ENCODE measurements at regions of chr15 and their contacts with region 1.

Region 1: GRCh38 chr15:80507712-80508316 is 103.6 kb downstream of the ARNT2 start:
- DNase-seq: peak; percentile 96
- ATAC-seq: peak; percentile 82
- H3K4me3 ChIP-seq: no peak overlapping the region
- H3K27ac ChIP-seq: peak overlapping the region; percentile 99
- H3K4me1 ChIP-seq: peaks cover 24% of the 10 kb centered on the region
- H3K27me3 ChIP-seq: no peaks in the 10 kb centered on the region
- CTCF ChIP-seq: no peak
- POLR2A ChIP-seq: no peak
- RAD21 ChIP-seq: no peak

Region 2: DNA sequence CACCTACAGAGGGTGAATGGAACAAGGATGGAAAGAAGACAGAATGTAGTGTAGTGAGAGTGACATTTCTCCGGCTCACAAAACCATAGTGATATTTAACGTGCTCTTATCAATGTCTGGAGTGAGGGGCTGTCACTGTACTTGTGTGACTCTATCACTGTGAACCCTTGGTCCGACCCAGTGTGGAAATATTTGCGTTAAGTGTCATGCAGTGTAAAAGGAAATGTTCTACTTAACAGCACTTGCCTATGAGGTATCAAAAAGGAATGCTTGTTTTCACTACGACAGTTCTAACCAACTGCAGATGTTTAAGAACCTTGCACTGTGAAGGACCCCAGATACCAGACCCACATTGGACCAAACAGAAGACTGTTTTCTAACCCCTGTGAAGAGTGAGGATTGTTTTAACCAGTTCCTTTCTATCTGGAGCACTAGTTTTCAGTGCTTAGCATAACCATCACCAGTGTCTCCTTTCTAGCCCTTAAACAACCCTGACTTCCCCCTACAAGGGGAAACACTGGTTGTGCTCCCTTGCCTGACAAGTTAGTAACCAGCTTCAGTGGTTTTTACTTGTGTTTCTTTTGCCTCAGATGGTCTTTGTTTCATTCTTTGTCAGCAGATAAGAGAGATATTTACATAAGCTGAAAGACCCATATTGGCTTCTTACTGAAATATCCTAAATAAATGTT is 42.5 kb after region 1 on chr15:
- CTCF ChIA-PET with region 1: no interaction called
- POLR2A ChIA-PET with region 1: no interaction called
- dilution Hi-C with region 1: no loop called
- in situ Hi-C with region 1: no loop called
- intact Hi-C with region 1: loop called (anchors 1 kb)
- DNase-seq: peak; percentile 98
- ATAC-seq: peak; percentile 86
- H3K4me3 ChIP-seq: peak overlapping the region; percentile 4; the same call in 1 of the 2 replicates
- H3K27ac ChIP-seq: peak overlapping the region; percentile 98
- H3K4me1 ChIP-seq: peaks cover 20% of the 10 kb centered on the region
- H3K27me3 ChIP-seq: no peaks in the 10 kb centered on the region
- CTCF ChIP-seq: no peak
- POLR2A ChIP-seq: no peak
- RAD21 ChIP-seq: no peak

Region 3: DNA sequence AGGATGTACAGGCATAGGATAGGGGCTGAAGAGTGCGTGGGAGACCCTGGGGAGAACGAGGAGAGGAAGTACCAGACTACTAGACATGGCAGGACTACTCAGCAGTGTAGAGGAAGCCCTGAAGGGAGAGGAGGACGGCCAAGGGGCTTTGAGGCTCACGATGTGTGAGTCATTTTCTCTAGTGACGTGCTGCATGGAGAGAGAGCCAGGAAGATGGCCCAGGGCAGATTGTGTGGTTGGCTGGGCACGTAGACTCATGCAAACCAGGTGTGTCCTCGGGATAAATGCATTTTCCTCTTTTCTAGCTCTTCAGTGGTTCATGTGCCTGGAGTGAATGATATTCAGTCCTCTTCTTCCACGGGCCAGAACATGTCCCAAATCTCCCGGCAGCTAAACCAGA is 72.3 kb after region 1 on chr15:
- CTCF ChIA-PET with region 1: no interaction called
- POLR2A ChIA-PET with region 1: no interaction called
- dilution Hi-C with region 1: no loop called
- in situ Hi-C with region 1: no loop called
- intact Hi-C with region 1: no loop called
- DNase-seq: peak; percentile 80
- ATAC-seq: no peak
- H3K4me3 ChIP-seq: no peak overlapping the region
- H3K27ac ChIP-seq: no peak overlapping the region
- H3K4me1 ChIP-seq: peaks cover 4% of the 10 kb centered on the region
- H3K27me3 ChIP-seq: no peaks in the 10 kb centered on the region
- CTCF ChIP-seq: no peak
- POLR2A ChIP-seq: no peak
- RAD21 ChIP-seq: no peak

Measured in IMR-90 (cell line).